ENCODE measurements at regions of chr16 and their contacts with region 1.

Region 1: GRCh38 chr16:81415751-81416150 is 28.9 kb upstream of the CMIP start:
- DNase-seq: no peak
- H3K4me3 ChIP-seq: no peak overlapping the region
- H3K27ac ChIP-seq: no peak overlapping the region
- H3K4me1 ChIP-seq: peaks cover 2% of the 10 kb centered on the region
- H3K27me3 ChIP-seq: no peaks in the 10 kb centered on the region
- CTCF ChIP-seq: no peak

Region 2: DNA sequence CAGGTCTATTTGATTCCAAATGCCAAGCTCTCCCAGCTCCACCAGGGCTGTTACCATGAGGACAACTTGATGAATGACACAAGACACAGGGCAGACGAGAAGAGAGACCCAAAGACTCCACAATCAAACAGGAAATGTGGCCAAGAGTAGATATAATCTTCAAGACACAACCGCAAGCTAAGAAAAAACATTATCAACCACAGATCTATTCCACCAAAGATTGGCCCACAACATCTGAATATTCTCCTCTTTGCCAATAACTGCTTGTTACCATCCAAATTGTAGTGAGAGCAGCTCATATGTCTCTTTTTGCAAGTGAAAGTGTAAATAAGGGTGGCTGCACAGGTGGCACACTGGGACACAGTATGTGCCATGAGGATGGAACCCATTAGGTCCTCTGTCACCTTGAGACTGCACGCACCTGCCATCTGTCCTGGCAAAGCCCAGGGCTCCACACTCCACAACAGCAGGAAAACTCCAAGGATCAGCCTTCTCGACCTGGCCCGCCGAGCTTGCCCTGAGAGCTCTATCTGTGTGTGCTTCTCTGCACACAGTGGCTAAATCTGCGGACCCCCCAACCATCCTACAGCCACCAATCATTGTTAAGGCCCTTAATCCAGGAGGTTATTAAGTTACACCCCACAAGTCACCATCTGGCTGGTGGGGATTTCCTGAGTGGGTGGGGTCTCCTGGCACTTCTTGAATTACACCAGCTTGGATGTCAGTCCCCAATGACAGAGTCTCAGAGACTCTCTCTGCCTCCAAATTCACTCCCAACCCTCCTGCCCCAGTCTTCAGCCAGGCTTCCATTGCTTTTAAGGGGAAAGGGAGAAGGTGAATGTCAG is 824.5 kb before region 1 on chr16:
- CTCF ChIA-PET with region 1: no interaction called
- POLR2A ChIA-PET with region 1: no interaction called
- intact Hi-C with region 1: no loop called
- DNase-seq: no peak
- H3K4me3 ChIP-seq: no peak overlapping the region
- H3K27ac ChIP-seq: no peak overlapping the region
- H3K4me1 ChIP-seq: no peaks in the 10 kb centered on the region
- H3K27me3 ChIP-seq: no peaks in the 10 kb centered on the region
- CTCF ChIP-seq: no peak

Region 3: DNA sequence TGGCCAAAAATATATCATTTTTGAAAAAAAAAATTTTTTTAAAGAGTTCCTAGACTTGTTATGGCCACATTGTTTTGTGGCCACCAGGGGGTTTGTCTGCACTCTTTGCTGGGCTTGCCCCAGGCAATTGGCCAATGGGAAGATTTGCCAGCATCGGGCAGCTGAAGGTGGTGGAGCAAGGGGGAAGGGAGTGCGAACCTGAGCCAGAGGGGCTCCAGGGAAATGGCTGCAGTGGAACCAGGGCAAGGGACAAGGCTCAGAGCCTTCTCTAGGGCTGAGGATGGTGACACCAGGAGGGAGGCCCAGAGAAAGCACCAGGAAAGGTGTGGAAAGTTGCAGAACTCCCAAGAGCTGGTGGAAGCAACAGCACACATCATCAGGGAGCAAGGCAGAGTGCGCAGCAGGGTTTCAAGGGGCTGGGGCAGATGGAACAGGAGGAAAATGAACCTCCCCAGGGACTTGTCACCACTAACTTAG is 13.3 kb after region 1 on chr16:
- CTCF ChIA-PET with region 1: interaction called, 3 read pairs
- POLR2A ChIA-PET with region 1: interaction called, 24 read pairs
- intact Hi-C with region 1: no loop called
- DNase-seq: peak; percentile 44 to 52
- H3K4me3 ChIP-seq: no peak overlapping the region
- H3K27ac ChIP-seq: no peak overlapping the region
- H3K4me1 ChIP-seq: no peaks in the 10 kb centered on the region; the same call in 1 of the 2 replicates
- H3K27me3 ChIP-seq: no peaks in the 10 kb centered on the region
- CTCF ChIP-seq: peak; percentile 67